Adrenal gland (tissue), 19 donors: ENCODE measurements at regions of chr5 and their contacts with region 1.

Region 1: GRCh38 chr5:64958757-64959391 is 190.1 kb downstream of the CWC27 start:
- DNase-seq: no peak
- H3K4me3 ChIP-seq: no peak overlapping the region
- H3K27ac ChIP-seq: no peak overlapping the region
- H3K4me1 ChIP-seq: no peaks in the 10 kb centered on the region
- H3K27me3 ChIP-seq: no peaks in the 10 kb centered on the region
- CTCF ChIP-seq: peak; percentile 42 to 65 (median 50)
- POLR2A ChIP-seq: no peak

Region 2: GRCh38 chr5:64811050-64811640 is 147.7 kb before region 1 on chr5:
- intact Hi-C with region 1: loop called in 1 of 2 experiments (anchors 10 kb)
- DNase-seq: peak in 3 of 7 donors; percentile 7 to 15 (median 8)
- H3K4me3 ChIP-seq: no peak overlapping the region
- H3K27ac ChIP-seq: no peak overlapping the region
- H3K4me1 ChIP-seq: no peaks in the 10 kb centered on the region
- H3K27me3 ChIP-seq: no peaks in the 10 kb centered on the region
- CTCF ChIP-seq: peak; percentile 51 to 78 (median 65)
- POLR2A ChIP-seq: no peak

Region 3: GRCh38 chr5:65062469-65063083 is 103.7 kb after region 1 on chr5:
- intact Hi-C with region 1: no loop called
- DNase-seq: peak in 6 of 7 donors; percentile 35 to 60 (median 42)
- H3K4me3 ChIP-seq: no peak overlapping the region
- H3K27ac ChIP-seq: no peak overlapping the region
- H3K4me1 ChIP-seq: peaks cover 0 to 9% of the 10 kb centered on the region in 2 donors
- H3K27me3 ChIP-seq: no peaks in the 10 kb centered on the region
- CTCF ChIP-seq: no peak
- POLR2A ChIP-seq: no peak